ENCODE measurements at regions of chr2 and their contacts with region 1.

Region 1: GRCh38 chr2:95076784-95077529 is 44.7 kb downstream of the MRPS5 start:
- DNase-seq: peak; percentile 86
- CTCF ChIP-seq: peak; percentile 93

Region 2: GRCh38 chr2:95022309-95023221 is 54.4 kb before region 1 on chr2:
- CTCF ChIA-PET with region 1: interaction called, 73 read pairs
- POLR2A ChIA-PET with region 1: no interaction called
- DNase-seq: peak; percentile 85
- CTCF ChIP-seq: peak; percentile 98

Region 3: GRCh38 chr2:95053543-95053942 is 23.4 kb before region 1 on chr2:
- CTCF ChIA-PET with region 1: interaction called, 88 read pairs
- POLR2A ChIA-PET with region 1: no interaction called
- DNase-seq: no peak
- CTCF ChIP-seq: peak; percentile 46

Region 4: DNA sequence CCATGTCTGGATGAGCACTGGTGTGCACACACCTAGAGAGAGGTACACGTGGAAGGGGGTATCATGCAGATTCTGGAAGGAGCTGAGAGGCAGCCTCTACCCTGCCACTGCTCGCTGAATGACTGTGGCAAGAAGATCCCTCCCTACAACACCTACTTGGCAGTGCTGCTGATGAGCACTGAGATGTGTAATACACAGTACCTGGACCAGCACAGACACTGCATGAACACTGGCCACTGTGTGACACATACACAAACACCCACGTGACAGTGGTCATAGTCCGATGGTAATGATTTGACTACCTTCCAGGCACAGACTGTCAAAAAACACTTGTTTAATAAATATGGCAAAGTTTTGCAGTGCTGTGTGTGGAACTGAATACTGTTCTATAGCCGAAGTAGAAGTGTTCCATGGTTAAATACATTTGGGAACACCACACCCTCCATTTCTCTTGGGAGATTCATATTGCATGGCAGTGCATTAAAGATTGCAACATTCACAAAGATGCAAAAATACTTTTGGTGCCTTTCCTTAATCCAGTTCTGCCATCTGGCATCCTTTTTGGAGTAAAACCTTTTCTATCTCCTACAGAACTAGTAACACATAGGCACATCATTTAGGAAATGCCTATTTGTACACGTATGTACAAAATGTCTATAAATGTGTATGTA is 15.1 kb after region 1 on chr2:
- CTCF ChIA-PET with region 1: interaction called, 57 read pairs
- POLR2A ChIA-PET with region 1: no interaction called
- DNase-seq: no peak
- CTCF ChIP-seq: no peak

Region 5: DNA sequence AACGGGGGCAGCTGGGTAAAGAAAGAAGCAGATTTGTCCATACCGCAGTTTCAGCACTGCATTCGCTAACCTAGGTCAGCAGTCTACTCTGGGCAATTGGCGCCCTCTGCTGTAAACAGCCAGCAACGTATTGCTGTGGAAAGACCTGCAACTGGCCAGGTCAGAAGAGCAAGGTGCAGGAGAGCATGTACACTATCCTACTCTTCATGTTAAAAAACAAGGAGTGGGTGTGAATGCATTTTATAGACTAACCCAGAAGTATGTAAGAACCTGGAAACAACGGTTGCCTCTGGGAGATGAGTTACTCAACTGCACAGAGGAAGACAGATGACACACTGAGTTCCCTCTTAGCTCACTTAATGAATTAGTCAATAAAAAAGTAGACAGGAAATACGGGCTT is 38.5 kb after region 1 on chr2:
- CTCF ChIA-PET with region 1: interaction called, 55 read pairs
- POLR2A ChIA-PET with region 1: no interaction called
- DNase-seq: peak; percentile 78
- CTCF ChIP-seq: peak; percentile 87